MCF 10A (cell line): ENCODE measurements at regions of chr3 and their contacts with region 1.

Region 1: DNA sequence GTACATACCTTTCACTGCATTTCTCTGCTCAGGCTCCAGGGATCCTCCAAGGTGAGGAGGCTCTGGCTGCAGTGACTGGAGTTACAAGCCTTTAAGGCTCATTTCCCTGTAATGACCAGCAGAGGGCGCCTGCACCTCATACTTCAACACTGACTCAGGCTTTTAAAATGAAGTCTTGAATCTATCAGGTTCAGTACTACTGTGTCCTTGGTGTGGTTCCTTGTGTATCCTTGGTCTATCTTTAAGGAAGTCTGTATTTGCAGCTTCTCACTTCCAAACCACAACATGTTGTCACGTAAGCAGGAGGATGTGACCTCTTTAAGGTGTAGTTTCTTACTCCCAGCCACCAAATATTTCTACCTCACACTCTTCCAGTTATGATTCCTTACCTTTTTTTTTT is 122.5 kb upstream of the ZBED2 start:
- DNase-seq: peak; percentile 92
- H3K4me3 Mint-ChIP-seq: no peak overlapping the region
- H3K27ac Mint-ChIP-seq: peak overlapping the region; percentile 27
- H3K4me1 Mint-ChIP-seq: peaks cover 20% of the 10 kb centered on the region
- H3K27me3 Mint-ChIP-seq: no peaks in the 10 kb centered on the region
- CTCF ChIP-seq: peak; percentile 82

Region 2: DNA sequence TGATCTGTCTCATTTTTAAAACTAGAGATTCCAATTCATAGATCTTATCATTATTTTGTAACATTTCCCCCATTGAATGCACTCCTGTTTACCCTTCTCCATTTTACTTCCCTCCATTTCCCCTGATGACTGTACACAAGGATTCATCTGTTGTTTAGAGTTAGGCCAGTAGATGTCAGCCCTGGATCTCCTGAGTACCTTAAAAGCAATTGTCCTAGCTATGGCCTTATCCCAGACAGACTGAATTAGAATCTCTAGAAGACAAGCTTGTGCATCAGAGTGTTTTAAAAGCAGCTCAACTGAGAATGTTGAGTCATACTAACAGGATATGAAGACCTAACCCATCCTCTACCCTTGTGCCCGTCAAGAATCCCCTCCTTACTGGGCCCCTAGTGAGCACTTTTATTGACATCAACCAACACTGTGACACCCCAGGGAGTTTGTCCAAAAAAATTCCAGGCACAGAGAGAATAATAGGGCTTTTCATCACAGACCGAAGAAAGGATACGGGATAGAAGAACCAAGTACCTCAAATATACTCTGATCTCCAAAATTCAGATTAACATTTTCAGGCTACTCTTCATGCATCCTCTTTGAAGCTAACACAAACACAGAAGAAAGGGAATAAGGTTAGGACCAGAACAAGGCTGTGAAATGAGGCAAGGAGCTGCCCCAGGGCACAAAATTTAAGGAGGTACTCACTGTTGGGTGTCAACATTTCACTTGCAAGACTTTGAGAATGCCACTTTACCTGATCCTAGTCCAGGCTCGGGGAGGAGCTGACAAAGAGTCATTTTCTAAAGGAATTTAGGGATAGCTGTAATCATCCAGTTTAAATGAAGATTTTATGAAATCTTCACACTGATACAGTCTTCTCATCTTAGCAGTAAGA is 139.6 kb before region 1 on chr3:
- CTCF ChIA-PET with region 1: interaction called, 83 read pairs
- POLR2A ChIA-PET with region 1: interaction called, 3 read pairs
- intact Hi-C with region 1: loop called (anchors 1 kb)
- DNase-seq: peak; percentile 81
- H3K4me3 Mint-ChIP-seq: no peak overlapping the region
- H3K27ac Mint-ChIP-seq: no peak overlapping the region
- H3K4me1 Mint-ChIP-seq: peaks cover 31% of the 10 kb centered on the region
- H3K27me3 Mint-ChIP-seq: no peaks in the 10 kb centered on the region
- CTCF ChIP-seq: peak; percentile 82

Region 3: DNA sequence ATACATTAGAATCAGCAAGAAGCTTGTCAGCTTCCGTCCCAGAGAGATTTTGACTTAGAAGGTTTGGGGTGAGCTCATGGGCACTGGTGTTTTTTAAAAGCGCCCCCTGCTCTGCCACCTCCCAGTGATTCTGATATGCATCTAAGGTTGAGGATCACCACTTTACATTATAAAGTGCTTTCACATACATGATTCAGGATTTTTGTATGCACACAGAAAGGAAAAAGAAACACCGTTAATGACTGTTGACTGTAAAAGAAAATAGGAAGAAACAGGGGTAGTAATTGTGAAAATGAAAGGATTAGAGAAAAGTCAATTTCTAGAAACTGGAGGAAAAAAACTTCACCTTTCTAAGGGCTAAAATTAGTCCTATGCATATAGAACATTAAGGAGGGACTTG is 17.5 kb before region 1 on chr3:
- CTCF ChIA-PET with region 1: interaction called, 37 read pairs
- POLR2A ChIA-PET with region 1: interaction called, 7 read pairs
- intact Hi-C with region 1: no loop called
- DNase-seq: no peak
- H3K4me3 Mint-ChIP-seq: no peak overlapping the region
- H3K27ac Mint-ChIP-seq: no peak overlapping the region
- H3K4me1 Mint-ChIP-seq: peaks cover 6% of the 10 kb centered on the region
- H3K27me3 Mint-ChIP-seq: no peaks in the 10 kb centered on the region
- CTCF ChIP-seq: no peak

Region 4: DNA sequence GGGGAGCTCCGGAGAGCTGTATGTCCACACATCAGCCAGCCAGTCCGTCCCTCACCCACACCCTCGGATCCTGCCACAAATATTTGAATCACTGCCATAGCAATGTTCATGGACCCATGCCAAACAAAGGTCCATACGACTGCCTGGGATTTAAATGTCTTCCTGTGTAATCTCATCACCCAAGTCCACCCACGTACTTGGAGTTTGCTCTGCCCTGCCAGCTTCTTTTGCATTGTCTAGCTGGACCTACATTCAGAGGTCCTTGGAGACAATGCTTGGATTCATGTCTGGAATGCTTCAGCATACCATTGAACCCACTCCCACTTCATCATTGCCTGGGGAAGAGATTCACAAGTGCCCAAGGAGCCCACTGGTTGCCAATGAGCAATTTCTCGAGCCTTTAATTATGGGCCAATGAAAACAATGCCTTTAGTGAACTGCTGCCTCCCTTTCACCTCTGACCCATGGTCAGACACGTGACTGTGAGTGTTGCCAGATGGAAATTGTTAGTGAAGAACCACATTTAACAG is 51.0 kb after region 1 on chr3:
- CTCF ChIA-PET with region 1: interaction called, 20 read pairs
- POLR2A ChIA-PET with region 1: no interaction called
- intact Hi-C with region 1: loop called (anchors 5 kb)
- DNase-seq: peak; percentile 96
- H3K4me3 Mint-ChIP-seq: no peak overlapping the region
- H3K27ac Mint-ChIP-seq: peak overlapping the region; percentile 82
- H3K4me1 Mint-ChIP-seq: peaks cover 38% of the 10 kb centered on the region
- H3K27me3 Mint-ChIP-seq: no peaks in the 10 kb centered on the region
- CTCF ChIP-seq: no peak

Region 5: GRCh38 chr3:111874177-111874820 is 156.7 kb after region 1 on chr3:
- CTCF ChIA-PET with region 1: interaction called, 371 read pairs
- POLR2A ChIA-PET with region 1: no interaction called
- intact Hi-C with region 1: no loop called
- DNase-seq: peak; percentile 65
- H3K4me3 Mint-ChIP-seq: no peak overlapping the region
- H3K27ac Mint-ChIP-seq: peak overlapping the region; percentile 9
- H3K4me1 Mint-ChIP-seq: peaks cover 38% of the 10 kb centered on the region
- H3K27me3 Mint-ChIP-seq: no peaks in the 10 kb centered on the region
- CTCF ChIP-seq: no peak

Region 6: GRCh38 chr3:111967651-111968274 is 250.2 kb after region 1 on chr3:
- CTCF ChIA-PET with region 1: interaction called, 278 read pairs
- POLR2A ChIA-PET with region 1: interaction called, 12 read pairs
- intact Hi-C with region 1: loop called (anchors 1 kb)
- DNase-seq: peak; percentile 86
- H3K4me3 Mint-ChIP-seq: no peak overlapping the region
- H3K27ac Mint-ChIP-seq: peak overlapping the region; percentile 5
- H3K4me1 Mint-ChIP-seq: peaks cover 11% of the 10 kb centered on the region
- H3K27me3 Mint-ChIP-seq: no peaks in the 10 kb centered on the region
- CTCF ChIP-seq: peak; percentile 86